Breast epithelium (tissue), 4 donors: ENCODE measurements at regions of chr20 and their contacts with region 1.

Region 1: GRCh38 chr20:17682103-17682888 is at the start of gene RRBP1:
- DNase-seq: peak; percentile 97 to 98
- H3K4me3 ChIP-seq: peak within 1 kb of the TSS; percentile 71 to 95 (median 86)
- H3K27ac ChIP-seq: peak within 1 kb of the TSS; percentile 93 to 97
- H3K4me1 ChIP-seq: peaks cover 4 to 5% of the 10 kb centered on the region in 2 donors
- H3K27me3 ChIP-seq: no peaks in the 10 kb centered on the region
- CTCF ChIP-seq: peak; percentile 59 to 78 (median 70)
- POLR2A ChIP-seq: peak; percentile 78
- total RNA-seq, gene RRBP1: 49.8 to 92.4 (median 78.0) TPM

Region 2: GRCh38 chr20:17898548-17898994 is 216.3 kb after region 1 on chr20:
- intact Hi-C with region 1: loop called (anchors 10 kb)
- DNase-seq: peak; percentile 76 to 83
- H3K4me3 ChIP-seq: no peak overlapping the region
- H3K27ac ChIP-seq: no peak overlapping the region
- H3K4me1 ChIP-seq: no peaks in the 10 kb centered on the region
- H3K27me3 ChIP-seq: no peaks in the 10 kb centered on the region
- CTCF ChIP-seq: peak; percentile 95 to 97 (median 97)
- POLR2A ChIP-seq: no peak